ENCODE measurements at regions of chr16 and their contacts with region 1.

Region 1: DNA sequence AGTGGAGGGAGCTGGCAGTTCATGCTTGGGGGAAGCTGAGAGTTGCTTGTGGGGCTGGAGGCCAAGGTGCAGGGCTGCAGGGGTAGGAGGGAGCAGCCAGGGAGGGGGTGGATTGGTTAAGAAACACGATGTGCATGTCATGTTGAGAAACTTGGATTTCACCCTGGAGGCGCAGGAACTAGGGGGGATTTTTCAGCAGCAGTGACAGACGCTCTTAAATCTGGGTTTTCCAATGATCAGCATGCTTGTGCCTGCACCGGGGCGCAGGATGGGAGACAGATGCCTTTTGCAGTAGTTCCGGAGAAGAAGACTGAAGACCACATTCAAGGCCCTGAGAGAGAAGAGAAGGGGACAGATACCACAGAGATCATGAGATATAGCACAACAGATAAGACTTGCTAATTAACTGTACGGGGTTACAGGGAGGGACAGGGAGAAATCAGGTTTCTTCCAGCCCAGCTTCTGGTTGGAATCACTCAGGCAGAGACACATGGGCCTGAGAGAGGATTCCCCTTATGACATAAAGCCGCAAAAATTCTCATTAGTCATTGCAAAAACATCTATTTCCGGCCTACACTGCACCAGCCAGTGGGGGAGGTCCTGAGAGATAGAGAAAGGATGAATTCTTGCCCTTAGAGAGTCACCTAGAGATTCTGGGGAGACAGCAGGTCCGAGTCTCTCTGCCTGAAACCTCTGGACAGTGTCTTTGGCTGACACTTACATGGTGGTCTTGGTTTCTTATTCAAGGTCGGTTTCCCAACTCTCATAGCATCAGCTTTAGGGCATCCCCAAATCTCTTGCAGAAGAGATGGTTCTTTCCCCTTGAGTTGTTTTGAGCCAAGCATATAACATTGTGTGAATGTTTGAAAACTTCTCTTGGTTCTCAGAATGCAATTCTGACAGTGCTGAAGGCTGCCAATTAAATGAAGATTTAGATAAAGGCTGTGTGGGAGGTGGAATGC is 27.1 kb downstream of the CDH13 start:
- DNase-seq: peak; percentile 87
- H3K4me3 Mint-ChIP-seq: peak overlapping the region; percentile 67
- H3K27ac Mint-ChIP-seq: peak overlapping the region; percentile 96
- H3K4me1 Mint-ChIP-seq: peaks cover 74% of the 10 kb centered on the region
- H3K27me3 Mint-ChIP-seq: no peaks in the 10 kb centered on the region

Region 2: DNA sequence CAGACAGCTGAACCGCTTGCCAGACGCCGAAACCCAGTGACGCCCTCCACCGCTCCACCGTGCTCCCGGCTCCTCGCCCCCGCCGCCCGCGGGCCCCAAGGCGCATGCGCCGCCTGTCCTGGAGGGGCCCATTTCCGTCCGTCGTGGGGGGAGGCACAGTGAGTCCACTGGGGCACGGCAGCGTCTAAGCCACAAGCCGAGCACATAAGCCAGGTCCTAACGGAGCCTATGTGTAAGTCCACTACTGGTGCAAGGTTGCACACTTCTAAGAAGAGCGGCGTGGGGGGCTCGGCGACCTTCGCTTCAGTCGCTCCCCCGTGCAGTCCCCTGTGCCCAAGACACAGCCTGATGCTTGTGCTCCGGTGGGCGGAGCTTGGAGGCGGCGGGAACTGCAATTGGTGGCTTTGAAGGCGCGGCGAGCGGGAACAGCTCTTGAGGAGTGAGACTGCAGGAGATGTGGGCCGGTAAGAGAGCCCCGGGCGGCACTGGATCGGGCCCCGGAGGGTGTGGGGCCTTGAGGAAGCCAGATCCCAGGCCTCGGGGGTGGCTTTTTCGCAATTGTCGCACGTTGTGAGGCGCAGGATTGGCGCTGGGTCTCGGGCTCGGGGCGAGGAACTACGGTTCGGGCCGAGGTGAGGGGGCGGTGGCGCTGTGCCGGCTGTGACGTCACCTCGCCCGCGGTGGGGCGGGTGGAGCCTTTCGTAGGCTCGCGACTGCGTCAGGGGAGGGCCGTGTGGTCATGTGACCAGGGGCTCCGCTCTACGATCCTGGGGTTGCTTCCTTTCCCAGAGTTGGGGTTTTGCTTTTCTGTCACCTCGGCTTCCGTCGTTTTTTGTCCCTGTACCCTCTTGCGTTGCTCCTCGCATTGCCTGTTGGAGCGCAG is 1646.8 kb before region 1 on chr16 and contains the starts of genes CENPN and CMC2:
- intact Hi-C with region 1: loop called (anchors 2 kb)
- DNase-seq: peak; percentile 99
- H3K4me3 Mint-ChIP-seq: peak within 1 kb of the TSS; percentile 98
- H3K27ac Mint-ChIP-seq: peak within 1 kb of the TSS; percentile 100
- H3K4me1 Mint-ChIP-seq: peaks cover 53% of the 10 kb centered on the region
- H3K27me3 Mint-ChIP-seq: no peaks in the 10 kb centered on the region
- total RNA-seq, gene CENPN: 61.8 and 63.3 TPM in 2 replicates
- total RNA-seq, gene CMC2: 130 and 137 TPM in 2 replicates

Region 3: DNA sequence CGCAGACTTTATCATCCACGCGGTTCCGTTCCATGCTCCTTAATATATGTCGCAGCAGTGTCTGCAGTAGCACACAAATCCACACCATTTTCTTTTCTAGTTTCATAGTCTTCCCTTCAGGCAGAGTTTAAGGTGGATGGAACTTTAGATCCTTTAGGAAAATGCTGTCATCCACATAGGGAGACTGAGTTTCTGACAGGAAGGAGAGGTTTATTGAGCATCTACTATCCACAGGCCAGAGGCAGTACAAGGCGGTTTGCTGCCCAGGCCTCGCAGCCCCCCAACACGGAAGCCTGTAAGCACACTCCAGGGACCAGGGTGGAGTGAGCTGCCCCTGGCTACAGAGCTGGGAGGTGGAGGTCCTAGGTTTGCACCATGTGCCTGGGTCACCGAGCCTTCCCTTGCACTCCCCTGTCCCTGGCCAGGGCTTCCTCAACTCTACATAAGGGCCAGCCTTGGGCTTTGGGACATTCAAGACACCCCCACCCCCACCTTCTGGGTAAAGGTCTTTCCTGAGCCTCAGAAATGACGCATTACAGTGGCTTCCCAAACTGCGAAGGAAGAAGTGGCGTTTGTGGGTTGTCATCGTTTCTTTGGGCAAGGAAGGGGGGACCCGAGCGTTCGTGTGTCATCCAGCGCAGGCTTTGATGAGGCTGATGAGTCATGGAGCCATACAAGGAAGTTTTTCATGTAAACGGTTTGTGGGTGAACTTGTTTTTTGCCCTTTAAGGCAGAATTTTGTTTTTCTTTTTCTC is 1021.3 kb before region 1 on chr16:
- intact Hi-C with region 1: loop called (anchors 10 kb)
- DNase-seq: peak; percentile 93
- H3K4me3 Mint-ChIP-seq: peak overlapping the region; percentile 82
- H3K27ac Mint-ChIP-seq: peak overlapping the region; percentile 100
- H3K4me1 Mint-ChIP-seq: peaks cover 65% of the 10 kb centered on the region
- H3K27me3 Mint-ChIP-seq: no peaks in the 10 kb centered on the region

Region 4: DNA sequence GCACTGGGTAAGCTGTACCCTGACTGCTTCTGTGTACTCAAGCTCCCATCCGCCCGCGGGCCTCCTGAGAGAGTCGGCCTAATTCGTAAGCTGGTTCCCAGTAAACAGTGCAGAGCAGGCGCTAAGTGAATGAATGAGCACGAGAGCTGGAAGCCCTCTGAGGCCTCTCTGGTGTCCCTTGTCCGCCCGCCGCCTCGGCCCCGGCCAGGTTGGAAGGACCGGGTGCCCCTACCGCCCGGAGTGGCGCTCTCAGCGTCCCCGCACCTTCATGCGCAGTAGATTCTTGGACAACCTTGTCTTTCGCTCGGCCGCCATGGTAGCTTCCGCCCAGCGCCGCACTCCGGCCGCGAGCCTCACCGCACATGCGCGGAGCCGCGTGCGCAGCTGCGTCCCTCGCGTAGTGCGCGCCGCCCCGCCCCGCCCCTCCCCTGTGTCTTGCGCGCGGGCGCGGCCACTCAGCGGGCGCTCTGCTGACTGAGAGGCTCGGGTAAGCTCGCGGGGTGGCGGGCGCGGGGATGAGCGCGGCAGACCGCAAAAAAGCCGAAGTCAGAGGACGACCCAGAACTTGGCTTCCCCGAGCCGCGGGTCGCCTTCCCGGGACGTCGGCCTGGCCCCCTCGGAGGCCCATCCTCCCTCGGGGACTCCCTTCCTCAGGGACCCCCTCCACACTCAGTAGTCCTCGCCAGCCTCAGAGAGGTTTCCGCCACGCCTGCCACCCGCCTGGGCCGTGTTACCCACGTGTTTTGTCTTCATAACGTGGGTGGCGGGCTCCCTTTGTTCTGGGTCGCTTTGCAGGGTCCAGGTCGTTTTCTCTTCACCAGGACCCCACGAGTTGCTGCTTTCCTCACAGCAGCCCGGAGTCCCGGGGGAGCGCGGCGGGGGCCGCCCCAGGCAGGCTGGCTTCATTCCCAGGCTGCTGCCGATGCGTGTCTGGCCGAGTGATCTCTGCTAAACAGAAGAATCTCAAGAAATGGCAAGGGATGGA is 483.7 kb before region 1 on chr16 and contains the start of gene MPHOSPH6:
- intact Hi-C with region 1: loop called (anchors 2 kb)
- DNase-seq: peak; percentile 97
- H3K4me3 Mint-ChIP-seq: peak within 1 kb of the TSS; percentile 91
- H3K27ac Mint-ChIP-seq: peak within 1 kb of the TSS; percentile 96
- H3K4me1 Mint-ChIP-seq: peaks cover 15% of the 10 kb centered on the region
- H3K27me3 Mint-ChIP-seq: peaks cover 33% of the 10 kb centered on the region
- total RNA-seq, gene MPHOSPH6: 54.1 and 54.8 TPM in 2 replicates

Region 5: DNA sequence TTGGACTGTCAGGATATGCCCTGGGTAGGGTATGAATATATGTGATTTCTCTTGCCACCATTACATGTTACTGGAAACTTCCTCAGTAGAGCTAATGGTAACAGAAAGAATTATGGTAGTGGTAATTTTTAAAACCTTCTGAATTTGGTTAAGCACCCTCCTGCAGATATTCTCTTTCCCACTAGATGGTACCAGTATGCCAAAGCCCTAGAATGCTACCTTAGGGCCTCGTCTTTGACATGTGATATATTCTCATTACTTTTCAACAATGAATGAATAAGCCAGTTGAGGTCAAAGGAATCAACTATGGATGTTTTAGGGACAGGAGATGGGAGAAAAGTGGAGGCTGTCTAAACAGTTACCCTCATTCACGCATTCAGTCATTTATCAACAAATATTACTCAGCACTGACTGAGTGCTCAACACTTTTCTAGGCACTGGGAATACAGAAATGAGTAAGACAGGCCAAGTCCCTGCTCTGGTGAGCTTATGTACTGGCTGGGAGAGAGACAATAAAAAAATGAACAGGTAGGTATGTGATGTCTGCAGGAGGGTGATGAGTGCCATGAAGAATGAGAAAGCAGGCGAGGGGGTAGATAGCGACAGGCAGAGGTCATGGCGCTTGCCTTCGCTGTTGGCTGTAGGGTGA is 12.4 kb before region 1 on chr16:
- intact Hi-C with region 1: loop called (anchors 1 kb)
- DNase-seq: no peak
- H3K4me3 Mint-ChIP-seq: peak overlapping the region; percentile 14
- H3K27ac Mint-ChIP-seq: no peak overlapping the region
- H3K4me1 Mint-ChIP-seq: peaks cover 18% of the 10 kb centered on the region
- H3K27me3 Mint-ChIP-seq: no peaks in the 10 kb centered on the region

Region 6: DNA sequence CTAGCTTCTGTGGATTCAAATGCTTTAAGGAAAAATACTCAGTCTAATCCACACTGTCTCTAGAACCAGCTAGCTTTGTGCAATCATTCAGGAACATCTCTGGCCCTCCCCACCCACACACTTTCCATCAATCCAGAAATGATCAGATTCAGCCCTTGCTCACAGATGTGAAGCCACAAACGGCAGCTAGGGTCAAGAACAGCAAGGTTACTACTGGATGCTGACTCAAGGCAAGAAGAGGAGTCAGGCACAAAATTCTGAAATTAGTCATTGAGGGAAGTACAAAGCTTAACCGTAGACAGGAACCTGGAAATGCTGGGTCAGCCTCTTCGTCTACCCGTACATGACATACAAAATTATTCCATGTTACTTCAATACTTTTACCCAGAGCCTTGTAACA is 147.5 kb after region 1 on chr16:
- intact Hi-C with region 1: loop called (anchors 5 kb)
- DNase-seq: no peak
- H3K4me3 Mint-ChIP-seq: no peak overlapping the region
- H3K27ac Mint-ChIP-seq: peak overlapping the region; percentile 17
- H3K4me1 Mint-ChIP-seq: peaks cover 4% of the 10 kb centered on the region
- H3K27me3 Mint-ChIP-seq: peaks cover under 1% of the 10 kb centered on the region